Activated naive CD4-positive, alpha-beta T cell treated with anti-CD3 and anti-CD28 coated beads for 36 hours (primary cell): ENCODE measurements at regions of chr16 and their contacts with region 1.

Region 1: DNA sequence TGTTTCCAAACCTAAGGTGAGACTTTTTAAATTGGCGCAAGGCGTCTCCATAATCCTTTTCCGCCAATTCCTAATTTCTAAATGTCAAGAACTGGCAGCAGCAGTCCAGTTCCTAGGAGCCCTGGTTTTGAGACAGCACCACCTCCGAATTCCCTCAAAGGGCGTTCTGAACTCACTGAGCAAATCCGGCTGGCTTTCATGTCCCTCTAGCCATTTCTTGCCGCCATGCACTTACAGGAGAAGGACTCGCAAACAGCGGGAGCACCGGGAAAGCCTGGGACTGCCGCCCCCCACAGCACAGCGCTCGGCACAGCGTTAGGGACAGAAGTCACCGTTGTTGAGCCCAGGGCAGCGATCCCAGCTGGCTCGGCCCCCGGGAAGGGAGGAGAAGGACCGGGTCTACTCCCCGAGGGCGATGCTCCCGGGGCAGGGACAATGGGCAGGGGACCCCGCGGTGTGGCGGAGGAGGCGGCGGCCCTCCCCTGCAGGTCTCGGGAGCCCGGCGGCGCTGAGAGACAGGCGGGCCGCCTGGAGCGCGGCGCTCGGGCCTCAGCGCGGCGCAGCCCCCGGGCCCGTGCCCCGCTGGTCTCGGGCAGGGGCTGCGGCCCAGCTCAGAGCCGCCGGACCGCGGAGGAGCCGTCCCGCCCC is 545 bp downstream of the ARHGAP17 start:
- DNase-seq: peak; percentile 47
- H3K4me3 Mint-ChIP-seq: peak overlapping the region; percentile 89
- H3K27ac Mint-ChIP-seq: peak overlapping the region; percentile 88
- H3K4me1 Mint-ChIP-seq: peaks cover 79% of the 10 kb centered on the region
- H3K27me3 Mint-ChIP-seq: no peaks in the 10 kb centered on the region

Region 2: DNA sequence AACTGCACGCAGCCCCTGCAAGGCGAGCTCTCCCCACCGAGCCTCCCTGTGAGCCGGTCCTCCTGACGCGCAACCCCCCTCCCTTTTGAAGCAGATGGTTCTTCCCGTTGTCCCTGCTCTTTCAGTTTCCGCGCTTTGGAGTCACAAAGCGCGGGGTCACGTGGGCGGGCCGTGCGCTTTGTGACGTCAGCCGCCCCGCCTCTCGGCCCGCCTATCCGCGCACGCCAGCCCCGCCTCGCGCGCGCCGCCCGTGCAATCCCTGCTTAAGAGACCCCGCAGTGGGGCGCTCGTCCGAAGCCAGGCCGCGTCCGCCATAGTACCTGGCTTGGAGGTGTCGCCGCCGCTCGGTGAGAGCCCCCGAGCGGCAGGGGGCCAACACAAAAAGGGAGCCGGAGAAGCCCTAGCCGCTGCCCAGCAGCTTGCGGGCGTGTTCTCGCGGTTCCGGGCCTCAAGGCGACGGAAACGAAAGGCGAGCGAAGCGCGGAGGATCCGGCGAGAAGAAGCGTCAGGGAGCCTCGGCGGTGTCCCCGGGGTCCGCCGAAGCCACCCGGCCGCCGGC is 475.3 kb before region 1 on chr16 and contains the start of gene RBBP6:
- CTCF ChIA-PET with region 1: no interaction called
- intact Hi-C with region 1: loop called (anchors 2 kb)
- DNase-seq: peak; percentile 92
- H3K4me3 Mint-ChIP-seq: peak within 1 kb of the TSS; percentile 99
- H3K27ac Mint-ChIP-seq: peak within 1 kb of the TSS; percentile 100
- H3K4me1 Mint-ChIP-seq: peaks cover 27% of the 10 kb centered on the region
- H3K27me3 Mint-ChIP-seq: no peaks in the 10 kb centered on the region
- total RNA-seq, gene RBBP6: 64.4 to 65.0 TPM

Region 3: DNA sequence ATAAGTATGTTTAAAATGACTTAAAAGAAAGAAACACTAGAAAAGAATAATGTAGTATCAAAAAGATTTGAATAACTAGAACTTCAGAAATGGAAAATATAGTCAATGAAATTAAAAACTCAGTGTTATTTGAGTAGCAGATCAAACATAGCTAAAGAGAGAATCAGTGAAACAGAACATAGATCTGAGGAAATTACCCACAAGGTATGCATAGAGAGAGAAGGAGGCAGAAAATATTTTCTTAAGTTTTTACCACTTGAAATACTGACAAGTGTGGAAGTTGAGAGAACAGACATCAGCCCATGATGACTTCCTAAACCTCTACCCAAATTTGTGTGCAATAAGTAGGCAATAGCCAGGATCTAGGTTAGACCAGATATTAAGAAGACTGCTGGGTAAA is 51.9 kb before region 1 on chr16:
- CTCF ChIA-PET with region 1: no interaction called
- intact Hi-C with region 1: no loop called
- DNase-seq: no peak
- H3K4me3 Mint-ChIP-seq: no peak overlapping the region
- H3K27ac Mint-ChIP-seq: no peak overlapping the region
- H3K4me1 Mint-ChIP-seq: no peaks in the 10 kb centered on the region
- H3K27me3 Mint-ChIP-seq: no peaks in the 10 kb centered on the region

Region 4: DNA sequence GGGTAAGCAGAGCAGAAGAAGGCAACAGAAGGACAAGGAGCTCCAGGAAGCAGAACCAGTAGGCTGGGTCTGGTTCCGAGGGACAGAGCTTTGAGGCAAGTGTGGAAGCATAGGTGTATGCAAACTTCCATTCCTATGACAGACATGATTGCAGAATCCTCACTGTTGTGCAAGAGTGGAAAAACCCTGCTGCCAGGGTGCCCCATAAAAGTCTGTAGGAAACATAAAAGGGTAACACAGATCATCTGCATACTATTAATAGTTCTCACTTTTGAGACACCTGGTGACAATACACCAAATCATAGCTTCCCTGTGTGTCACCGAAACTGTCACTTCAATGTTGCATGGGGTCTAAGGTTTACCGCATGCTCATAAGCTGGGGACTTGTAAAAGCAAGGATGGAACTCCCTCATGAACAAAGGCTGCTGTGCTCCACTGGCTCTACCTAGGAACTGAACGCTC is 39.2 kb before region 1 on chr16:
- CTCF ChIA-PET with region 1: interaction called, 5 read pairs
- intact Hi-C with region 1: loop called (anchors 1 kb)
- DNase-seq: peak; percentile 77
- H3K4me3 Mint-ChIP-seq: no peak overlapping the region
- H3K27ac Mint-ChIP-seq: peak overlapping the region; percentile 62
- H3K4me1 Mint-ChIP-seq: peaks cover 56% of the 10 kb centered on the region
- H3K27me3 Mint-ChIP-seq: no peaks in the 10 kb centered on the region

Region 5: DNA sequence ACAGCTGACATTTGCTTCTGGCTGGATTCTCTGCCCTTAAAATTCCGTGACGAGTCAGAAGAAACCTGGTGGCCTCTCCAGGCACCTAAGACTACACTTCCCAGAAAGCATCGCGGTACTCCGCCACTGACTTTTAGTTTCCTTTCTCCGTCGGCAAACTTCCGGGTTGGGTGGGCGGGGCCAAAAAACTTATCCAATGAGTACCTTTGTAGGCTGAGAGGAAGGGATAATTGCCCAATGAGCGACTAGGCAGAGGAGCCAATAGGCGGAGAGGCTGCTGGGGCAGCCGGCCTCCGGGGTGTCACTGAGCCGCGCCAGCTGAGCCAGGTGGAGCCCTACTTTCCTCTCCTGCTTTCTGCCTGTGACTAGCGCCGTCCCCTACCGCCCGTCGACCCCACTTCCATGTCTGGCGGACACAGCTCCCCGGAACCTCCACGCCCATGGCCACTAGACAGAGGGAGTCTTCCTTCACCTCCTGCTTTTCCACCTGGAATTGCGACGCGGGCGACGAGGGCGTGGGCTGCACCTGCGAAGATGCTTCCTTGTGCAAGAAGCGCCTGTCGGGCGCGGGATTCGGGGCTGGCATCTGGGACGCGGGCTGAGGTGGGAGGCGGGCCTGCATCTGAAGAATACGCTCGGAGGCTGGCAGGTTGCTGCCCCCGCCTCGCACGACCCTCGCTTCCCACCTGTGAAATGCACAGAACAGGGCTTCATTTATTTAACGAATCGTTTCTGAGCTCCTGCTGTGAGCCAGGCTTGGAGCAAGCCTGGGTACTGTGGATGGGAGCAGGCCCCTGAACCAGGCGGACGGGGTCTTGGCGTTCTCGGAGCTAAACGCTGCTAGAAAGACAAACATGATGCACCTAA is 17.1 kb after region 1 on chr16:
- CTCF ChIA-PET with region 1: interaction called, 3 read pairs
- intact Hi-C with region 1: loop called (anchors 1 kb)
- DNase-seq: peak; percentile 96
- H3K4me3 Mint-ChIP-seq: peak overlapping the region; percentile 83
- H3K27ac Mint-ChIP-seq: peak overlapping the region; percentile 98
- H3K4me1 Mint-ChIP-seq: peaks cover 52% of the 10 kb centered on the region
- H3K27me3 Mint-ChIP-seq: no peaks in the 10 kb centered on the region

Region 6: DNA sequence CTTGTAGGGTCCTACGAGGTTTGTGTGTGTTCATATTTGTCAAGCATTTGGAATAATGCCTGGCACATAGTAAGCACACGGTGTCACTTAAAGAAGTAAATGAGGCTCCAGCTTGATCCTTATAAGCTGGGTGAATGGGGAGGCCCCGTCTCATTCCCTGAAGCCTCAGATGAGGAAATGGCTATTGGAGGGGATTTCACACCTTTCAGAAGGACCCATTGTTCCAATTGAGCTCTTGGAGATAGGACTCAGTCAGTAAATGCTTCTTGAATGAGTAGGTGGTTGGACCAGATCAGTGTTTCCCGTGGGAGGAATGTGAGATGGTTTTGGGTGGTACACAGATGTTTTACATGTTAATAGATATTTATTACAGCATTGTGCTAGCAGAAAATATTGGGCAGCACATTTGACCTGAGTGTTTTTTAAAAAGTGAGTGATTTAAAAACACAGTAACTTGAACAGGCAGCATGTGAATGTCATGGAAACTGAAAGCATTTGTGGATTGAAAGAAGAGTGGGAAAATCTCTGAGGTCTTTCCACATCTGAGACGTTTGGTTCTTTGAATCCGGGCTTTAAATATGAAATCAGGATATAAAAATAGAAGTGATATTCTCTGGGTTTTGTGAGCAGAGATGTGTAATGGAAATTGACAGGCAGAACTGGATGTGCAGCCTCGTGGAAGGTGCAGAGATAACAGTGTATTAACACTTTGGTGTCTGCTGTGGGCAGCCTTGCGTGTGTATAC is 37.0 kb after region 1 on chr16:
- CTCF ChIA-PET with region 1: interaction called, 3 read pairs
- intact Hi-C with region 1: loop called (anchors 1 kb)
- DNase-seq: peak; percentile 39
- H3K4me3 Mint-ChIP-seq: peak overlapping the region; percentile 53
- H3K27ac Mint-ChIP-seq: peak overlapping the region; percentile 74
- H3K4me1 Mint-ChIP-seq: peaks cover 66% of the 10 kb centered on the region
- H3K27me3 Mint-ChIP-seq: no peaks in the 10 kb centered on the region

Region 7: GRCh38 chr16:25192096-25192495 is 177.5 kb after region 1 on chr16:
- CTCF ChIA-PET with region 1: no interaction called
- intact Hi-C with region 1: no loop called
- DNase-seq: no peak
- H3K4me3 Mint-ChIP-seq: no peak overlapping the region
- H3K27ac Mint-ChIP-seq: no peak overlapping the region
- H3K4me1 Mint-ChIP-seq: no peaks in the 10 kb centered on the region
- H3K27me3 Mint-ChIP-seq: no peaks in the 10 kb centered on the region

Region 8: DNA sequence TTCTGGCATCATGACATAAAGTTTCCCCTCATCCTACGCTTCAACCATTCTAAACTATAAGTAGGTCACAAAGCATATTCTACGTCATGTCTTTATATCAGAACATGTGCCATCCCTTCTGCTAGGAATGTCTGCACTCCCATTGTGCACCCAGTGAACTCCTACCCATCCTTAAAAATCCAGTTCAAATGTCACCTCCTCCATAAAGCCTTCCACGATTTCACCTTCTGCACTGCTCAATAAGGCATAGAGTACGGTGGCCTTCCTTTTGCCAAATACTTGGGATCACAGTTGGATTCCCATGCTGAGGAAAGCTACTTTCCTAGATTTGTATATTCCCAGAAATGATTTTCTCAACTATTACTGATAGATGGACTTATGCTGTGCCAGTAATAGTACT is 429.4 kb after region 1 on chr16:
- CTCF ChIA-PET with region 1: no interaction called
- intact Hi-C with region 1: no loop called
- DNase-seq: no peak
- H3K4me3 Mint-ChIP-seq: no peak overlapping the region
- H3K27ac Mint-ChIP-seq: no peak overlapping the region
- H3K4me1 Mint-ChIP-seq: no peaks in the 10 kb centered on the region
- H3K27me3 Mint-ChIP-seq: peaks cover 18% of the 10 kb centered on the region